Activated CD8-positive, alpha-beta T cell treated with anti-CD3 and anti-CD28 coated beads, Interleukin-2, amount 10 ng/mL, durations not matched to agents 7 days and 5 days (primary cell): ENCODE measurements at regions of chr5 and their contacts with region 1.

Region 1: DNA sequence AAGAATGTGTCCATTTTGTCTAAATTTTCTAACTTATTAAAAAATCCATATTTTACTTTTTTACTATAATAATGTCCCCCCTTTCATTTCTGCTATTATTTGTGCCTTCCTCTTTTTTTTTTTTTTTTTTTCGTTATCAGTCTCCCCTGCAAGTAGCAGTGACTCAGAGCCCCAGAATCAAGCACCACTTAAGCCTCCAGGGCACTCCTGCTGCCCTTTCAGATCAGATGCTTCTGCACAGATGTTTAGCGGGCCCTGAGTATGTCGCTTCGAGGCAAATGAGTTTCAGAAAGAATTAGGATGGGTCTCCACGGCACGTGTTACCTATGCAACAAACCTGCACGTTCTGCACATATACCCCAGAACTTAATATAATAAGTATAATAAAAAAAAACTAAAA is 11.7 kb downstream of the MED7 start:
- DNase-seq: no peak
- ATAC-seq: no peak
- H3K4me3 Mint-ChIP-seq: no peak overlapping the region
- H3K27ac Mint-ChIP-seq: no peak overlapping the region
- H3K4me1 Mint-ChIP-seq: peaks cover 39% of the 10 kb centered on the region
- H3K27me3 Mint-ChIP-seq: no peaks in the 10 kb centered on the region

Region 2: GRCh38 chr5:155943516-155944407 is 1187.2 kb before region 1 on chr5:
- CTCF ChIA-PET with region 1: interaction called, 10 read pairs
- POLR2A ChIA-PET with region 1: no interaction called
- DNase-seq: peak; percentile 46
- ATAC-seq: no peak
- H3K4me3 Mint-ChIP-seq: no peak overlapping the region
- H3K27ac Mint-ChIP-seq: no peak overlapping the region
- H3K4me1 Mint-ChIP-seq: peaks cover 3% of the 10 kb centered on the region
- H3K27me3 Mint-ChIP-seq: peaks cover 9% of the 10 kb centered on the region

Region 3: DNA sequence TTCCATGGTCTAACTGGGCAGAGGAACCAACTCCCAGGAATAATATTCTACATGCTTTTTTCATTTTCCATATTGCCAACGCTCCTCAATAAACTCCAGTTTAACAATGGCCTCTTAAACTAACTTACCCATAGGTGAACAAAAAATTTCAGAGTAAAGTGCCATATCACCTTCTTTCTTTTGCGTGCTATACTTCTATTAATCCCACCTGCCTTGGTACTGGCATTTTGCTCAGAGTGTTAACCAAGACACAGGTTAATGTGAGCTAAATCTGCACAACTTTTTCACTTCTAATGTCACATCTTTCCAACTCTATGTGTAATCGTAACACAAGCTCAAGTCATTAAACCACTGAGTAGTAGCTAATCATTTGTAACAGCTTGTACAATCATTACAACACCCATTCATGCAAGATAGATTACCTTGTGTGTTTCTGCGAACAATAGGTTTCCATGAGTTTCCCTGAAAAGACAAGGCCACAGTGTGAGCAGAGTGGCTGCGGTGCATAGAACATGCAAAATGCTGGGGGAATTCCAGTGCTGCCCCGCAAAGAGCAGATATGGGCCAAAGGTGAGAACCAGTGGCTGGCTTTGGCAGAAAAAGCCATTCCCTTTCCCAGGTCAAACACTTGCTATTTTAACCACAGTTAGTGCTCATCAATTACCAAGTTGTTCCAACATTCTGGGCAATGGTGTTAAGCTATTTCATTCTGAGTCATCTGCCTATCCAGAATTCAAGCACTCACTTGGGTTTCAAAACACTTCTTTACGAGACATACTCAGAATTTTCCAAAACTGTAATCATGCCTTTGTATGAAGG is 210.7 kb before region 1 on chr5:
- CTCF ChIA-PET with region 1: interaction called, 11 read pairs
- POLR2A ChIA-PET with region 1: no interaction called
- DNase-seq: peak; percentile 58
- ATAC-seq: peak; percentile 76
- H3K4me3 Mint-ChIP-seq: peak overlapping the region; percentile 65
- H3K27ac Mint-ChIP-seq: peak overlapping the region; percentile 79
- H3K4me1 Mint-ChIP-seq: peaks cover 75% of the 10 kb centered on the region
- H3K27me3 Mint-ChIP-seq: no peaks in the 10 kb centered on the region

Region 4: DNA sequence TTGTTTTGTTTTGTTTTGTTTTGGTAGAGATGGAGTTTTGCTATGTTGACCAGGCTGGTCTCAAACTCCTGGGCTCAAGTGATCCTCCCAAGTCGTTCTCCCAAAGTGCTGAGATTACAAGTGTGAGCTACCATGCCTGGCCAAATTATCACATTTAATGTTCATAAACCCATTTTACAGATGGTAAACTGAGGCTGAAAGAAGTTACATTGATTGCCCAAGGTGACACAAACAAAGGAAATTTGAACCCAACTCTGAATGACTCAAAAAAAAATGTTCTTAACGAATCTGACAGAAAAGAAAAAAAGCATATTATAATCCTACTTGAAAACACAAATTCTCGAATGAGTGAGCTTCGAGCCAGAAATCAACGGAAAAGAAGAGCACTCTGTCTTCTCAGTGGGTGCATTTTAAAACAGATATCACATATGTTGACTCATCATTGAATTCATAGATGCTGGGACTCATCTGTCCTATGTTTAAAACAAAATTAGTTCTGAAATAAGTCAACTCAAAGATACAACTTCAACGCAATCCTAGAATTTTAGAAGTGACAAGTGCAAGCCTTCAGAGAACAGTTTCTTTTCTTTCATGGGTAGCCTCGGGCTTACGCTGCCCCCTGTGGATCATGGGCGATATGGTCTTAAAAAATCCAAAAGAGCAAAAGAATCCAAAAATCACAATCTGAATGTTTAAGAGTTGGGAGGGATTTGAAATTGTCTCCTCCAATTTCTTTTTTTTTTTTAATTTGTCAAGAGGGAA is 196.3 kb before region 1 on chr5:
- CTCF ChIA-PET with region 1: interaction called, 25 read pairs
- POLR2A ChIA-PET with region 1: no interaction called
- DNase-seq: peak; percentile 82
- ATAC-seq: peak; percentile 57
- H3K4me3 Mint-ChIP-seq: peak overlapping the region; percentile 18
- H3K27ac Mint-ChIP-seq: peak overlapping the region; percentile 41
- H3K4me1 Mint-ChIP-seq: peaks cover 82% of the 10 kb centered on the region
- H3K27me3 Mint-ChIP-seq: no peaks in the 10 kb centered on the region

Region 5: DNA sequence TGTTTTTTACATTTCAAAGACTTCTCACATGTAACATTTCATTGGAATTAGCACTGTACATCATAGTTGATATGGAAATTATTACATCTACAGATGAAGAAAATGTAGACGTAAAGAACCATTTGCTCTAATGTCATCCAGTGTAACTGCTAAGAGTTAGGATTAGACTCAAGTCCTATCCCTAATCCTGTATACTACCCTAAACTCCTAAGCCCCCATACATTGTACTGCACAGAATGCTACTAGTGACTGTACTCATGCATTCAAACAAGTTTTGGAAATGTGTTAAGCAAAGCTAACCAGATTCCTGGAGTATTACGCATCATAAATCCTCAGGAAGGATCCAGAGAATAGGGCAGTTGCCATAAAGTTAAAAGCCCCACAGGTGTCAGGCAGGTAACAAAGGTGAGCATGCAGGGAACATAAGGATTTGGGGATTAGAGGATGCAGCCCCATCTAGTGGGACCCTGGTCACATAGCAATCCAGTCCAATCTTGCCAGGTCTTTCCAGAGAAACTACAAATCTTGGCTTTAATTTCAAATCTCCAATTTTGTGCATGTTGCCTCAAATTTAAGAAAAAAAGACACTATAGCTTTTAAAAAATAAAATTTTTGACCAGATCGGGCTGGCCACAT is 104.0 kb before region 1 on chr5:
- CTCF ChIA-PET with region 1: interaction called, 16 read pairs
- POLR2A ChIA-PET with region 1: interaction called, 3 read pairs
- DNase-seq: peak; percentile 34
- ATAC-seq: no peak
- H3K4me3 Mint-ChIP-seq: no peak overlapping the region
- H3K27ac Mint-ChIP-seq: peak overlapping the region; percentile 81
- H3K4me1 Mint-ChIP-seq: peaks cover 91% of the 10 kb centered on the region
- H3K27me3 Mint-ChIP-seq: no peaks in the 10 kb centered on the region

Region 6: DNA sequence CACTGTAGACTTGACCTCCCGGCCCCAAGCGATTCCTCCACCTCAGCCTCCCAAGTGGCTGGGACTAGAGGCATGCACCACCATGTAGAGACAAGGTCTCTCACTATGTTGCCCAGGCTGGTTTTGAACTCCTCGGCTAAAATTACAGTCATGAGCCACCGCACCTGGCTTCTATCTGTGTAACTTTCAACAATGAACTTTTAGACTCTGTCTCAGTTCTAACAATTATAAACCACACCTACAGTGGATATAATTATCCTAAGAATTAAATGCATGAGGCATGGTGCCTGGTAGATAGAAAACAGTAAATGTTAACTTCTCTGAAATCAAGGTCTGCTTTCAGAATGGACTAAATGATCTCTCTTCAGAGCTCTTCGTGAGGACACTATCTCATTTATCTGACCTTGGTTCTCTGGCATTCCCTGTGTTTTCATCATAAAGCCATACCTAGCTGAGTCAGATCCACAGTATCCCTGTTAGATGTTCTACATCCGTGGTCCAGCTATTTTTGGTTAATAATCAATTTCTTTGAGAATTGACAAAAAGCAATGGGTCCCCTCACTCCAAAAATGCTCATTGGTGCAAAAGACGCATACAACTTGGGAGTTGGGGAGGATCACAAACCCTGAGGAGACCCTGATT is 79.2 kb before region 1 on chr5:
- CTCF ChIA-PET with region 1: no interaction called
- POLR2A ChIA-PET with region 1: no interaction called
- DNase-seq: no peak
- ATAC-seq: no peak
- H3K4me3 Mint-ChIP-seq: no peak overlapping the region
- H3K27ac Mint-ChIP-seq: peak overlapping the region; percentile 67
- H3K4me1 Mint-ChIP-seq: peaks cover 41% of the 10 kb centered on the region
- H3K27me3 Mint-ChIP-seq: no peaks in the 10 kb centered on the region

Region 7: GRCh38 chr5:157108976-157109375 is 21.9 kb before region 1 on chr5 and contains the start of gene HAVCR2:
- CTCF ChIA-PET with region 1: interaction called, 20 read pairs
- POLR2A ChIA-PET with region 1: interaction called, 5 read pairs
- DNase-seq: peak; percentile 85
- ATAC-seq: peak; percentile 88
- H3K4me3 Mint-ChIP-seq: peak within 1 kb of the TSS; percentile 93
- H3K27ac Mint-ChIP-seq: peak within 1 kb of the TSS; percentile 92
- H3K4me1 Mint-ChIP-seq: peaks cover 72% of the 10 kb centered on the region
- H3K27me3 Mint-ChIP-seq: no peaks in the 10 kb centered on the region
- total RNA-seq, gene HAVCR2: 77.6 to 78.7 TPM

Region 8: GRCh38 chr5:157116483-157116954 is 14.4 kb before region 1 on chr5:
- CTCF ChIA-PET with region 1: interaction called, 14 read pairs
- POLR2A ChIA-PET with region 1: no interaction called
- DNase-seq: no peak
- ATAC-seq: peak; percentile 57
- H3K4me3 Mint-ChIP-seq: peak overlapping the region; percentile 7
- H3K27ac Mint-ChIP-seq: peak overlapping the region; percentile 56
- H3K4me1 Mint-ChIP-seq: peaks cover 43% of the 10 kb centered on the region
- H3K27me3 Mint-ChIP-seq: no peaks in the 10 kb centered on the region